ENCODE measurements at regions of chr5 and their contacts with region 1.

Region 1: DNA sequence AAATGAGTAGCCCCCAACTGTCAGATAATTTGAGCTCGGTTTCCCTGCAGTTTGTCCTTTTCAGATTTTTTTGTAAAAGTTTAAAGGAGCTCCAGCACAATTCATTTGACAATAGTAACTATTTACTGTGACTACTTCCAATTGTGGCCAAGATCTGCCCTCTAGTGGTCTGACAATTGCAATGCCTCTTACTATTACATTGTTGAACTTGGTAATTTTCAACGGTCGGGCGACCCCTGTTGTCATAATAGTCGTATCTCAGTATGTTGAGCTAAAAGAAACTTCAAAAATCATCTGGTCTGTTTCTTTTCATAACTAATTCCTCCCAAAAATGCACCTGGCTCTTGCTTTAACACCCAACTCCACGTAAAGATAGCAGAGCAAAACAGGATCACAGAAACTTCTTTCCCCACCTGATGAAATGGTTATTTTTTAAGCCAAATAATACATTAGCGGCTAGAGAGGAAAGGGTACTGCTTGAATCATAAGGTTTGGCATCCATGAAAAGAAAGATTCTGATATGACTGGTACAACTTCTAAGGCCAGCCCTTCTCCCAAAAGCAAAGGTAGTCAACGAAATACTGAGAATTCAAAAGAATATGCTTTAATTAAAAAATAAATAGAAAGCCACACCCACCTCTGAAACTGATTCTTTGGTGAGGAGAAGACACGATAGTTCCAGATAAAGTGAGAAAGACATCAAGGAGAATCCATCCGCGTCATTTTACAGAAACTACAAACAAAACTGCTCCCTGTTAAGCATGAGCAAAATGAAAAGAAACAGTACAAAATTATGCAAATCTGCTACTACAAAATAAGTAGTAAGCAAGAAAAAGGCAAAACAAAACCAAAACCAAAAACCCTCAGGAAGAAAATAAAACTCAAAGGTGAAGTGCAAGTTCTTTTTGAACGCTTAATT is 76.9 kb upstream of the HTR4 start:
- DNase-seq: peak; percentile 56 to 75 (median 70)
- H3K4me3 ChIP-seq: no peak overlapping the region
- H3K4me3 Mint-ChIP-seq: no peak overlapping the region
- H3K27ac ChIP-seq: no peak overlapping the region
- H3K27ac Mint-ChIP-seq: no peak overlapping the region
- H3K4me1 ChIP-seq: peaks cover 7 to 10% of the 10 kb centered on the region in 2 donors
- H3K4me1 Mint-ChIP-seq: peaks cover 19% of the 10 kb centered on the region
- H3K27me3 ChIP-seq: no peaks in the 10 kb centered on the region
- H3K27me3 Mint-ChIP-seq: peaks cover 1 to 2% (median 1%) of the 10 kb centered on the region in 3 donors
- CTCF ChIP-seq: peak; percentile 93

Region 2: DNA sequence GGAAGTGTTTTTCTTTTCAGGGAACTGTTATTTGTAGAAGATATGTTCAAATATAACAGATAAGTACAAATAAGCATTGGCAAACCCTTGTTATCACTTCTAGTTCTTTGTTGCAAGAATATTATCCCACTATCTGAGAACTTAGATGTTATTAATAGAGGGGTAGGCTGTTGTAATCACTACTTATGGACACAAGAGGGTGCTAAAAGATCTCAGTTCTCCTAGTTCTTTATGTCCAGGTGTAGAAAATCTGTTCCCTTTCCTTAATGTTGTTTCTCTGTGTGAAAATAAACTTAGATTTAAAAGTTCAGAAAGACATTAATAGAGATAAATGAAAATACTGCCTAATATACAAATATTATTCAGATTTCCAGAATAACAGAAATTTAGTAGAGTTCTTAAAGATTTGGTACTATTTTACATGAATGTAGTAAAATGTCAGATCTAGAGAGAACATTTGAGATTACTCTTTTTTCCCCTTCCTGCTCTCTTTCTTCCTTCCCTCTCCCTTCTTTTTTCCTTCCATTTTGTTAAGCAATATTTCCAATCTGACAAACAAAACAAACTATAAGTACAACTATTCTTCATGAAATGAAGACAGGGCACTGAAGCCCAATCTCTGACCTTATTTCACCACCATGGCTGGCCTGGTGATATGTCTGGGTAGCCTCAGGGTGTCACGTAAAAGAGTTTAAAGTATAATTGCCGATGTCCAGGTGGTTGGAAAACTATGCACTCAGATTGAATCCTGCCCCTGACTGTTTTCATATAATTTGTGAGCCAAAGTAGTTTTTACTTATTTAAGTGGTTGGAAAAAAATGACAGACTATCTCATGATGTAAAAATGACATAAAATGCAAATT is 781.3 kb before region 1 on chr5:
- intact Hi-C with region 1: loop called in 1 of 2 experiments (anchors 5 kb)
- DNase-seq: peak in 2 of 3 donors; percentile 8 to 32
- H3K4me3 ChIP-seq: no peak overlapping the region
- H3K4me3 Mint-ChIP-seq: no peak overlapping the region
- H3K27ac ChIP-seq: no peak overlapping the region
- H3K27ac Mint-ChIP-seq: no peak overlapping the region
- H3K4me1 ChIP-seq: no peaks in the 10 kb centered on the region
- H3K4me1 Mint-ChIP-seq: no peaks in the 10 kb centered on the region
- H3K27me3 ChIP-seq: no peaks in the 10 kb centered on the region
- H3K27me3 Mint-ChIP-seq: peaks cover 0 to 1% (median 0%) of the 10 kb centered on the region in 3 donors
- CTCF ChIP-seq: peak; percentile 81

Region 3: GRCh38 chr5:148179234-148179824 is 551.9 kb before region 1 on chr5:
- intact Hi-C with region 1: loop called in 1 of 2 experiments (anchors 5 kb)
- DNase-seq: peak; percentile 62 to 81 (median 77)
- H3K4me3 ChIP-seq: no peak overlapping the region
- H3K4me3 Mint-ChIP-seq: no peak overlapping the region
- H3K27ac ChIP-seq: no peak overlapping the region
- H3K27ac Mint-ChIP-seq: no peak overlapping the region
- H3K4me1 ChIP-seq: no peaks in the 10 kb centered on the region
- H3K4me1 Mint-ChIP-seq: peaks cover 2% of the 10 kb centered on the region
- H3K27me3 ChIP-seq: no peaks in the 10 kb centered on the region
- H3K27me3 Mint-ChIP-seq: peaks cover 1 to 5% (median 2%) of the 10 kb centered on the region in 3 donors
- CTCF ChIP-seq: peak; percentile 83

Region 4: DNA sequence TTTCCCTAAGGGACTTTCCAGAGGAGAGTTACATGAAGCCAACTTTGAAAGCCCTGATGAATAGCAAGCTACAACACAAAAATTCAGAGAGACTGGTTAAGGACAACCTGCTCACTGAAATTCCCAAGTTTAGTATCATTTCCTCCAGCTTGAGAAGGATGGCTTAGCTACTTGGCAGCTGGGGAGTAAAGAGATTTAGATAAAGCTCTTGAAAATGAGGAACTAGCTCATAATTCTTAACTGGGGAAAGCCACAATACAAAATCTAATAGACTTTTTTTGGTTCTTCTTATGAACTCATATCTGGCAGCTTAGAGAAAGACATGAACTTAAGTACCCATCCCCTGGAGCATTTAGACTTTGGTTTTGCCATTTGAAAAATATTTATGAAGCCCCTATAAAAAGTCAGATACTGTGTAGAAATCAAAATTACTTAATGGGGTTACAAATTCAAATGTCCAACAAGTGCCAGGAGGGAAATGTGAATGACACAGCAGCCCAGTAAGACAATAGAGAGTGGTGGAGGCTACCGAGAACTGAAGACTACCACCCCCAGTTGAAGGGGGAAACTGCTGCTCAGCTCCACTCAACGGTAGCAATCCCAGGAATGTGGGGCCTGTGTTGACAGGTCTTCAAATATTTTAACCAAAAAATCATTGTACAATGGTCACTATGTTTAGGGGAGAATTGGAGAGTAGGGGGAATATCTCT is 15.8 kb after region 1 on chr5:
- intact Hi-C with region 1: no loop called
- DNase-seq: peak in 2 of 3 donors; percentile 55 to 68
- H3K4me3 ChIP-seq: peak overlapping the region in 1 of 3 experiments; percentile 16
- H3K4me3 Mint-ChIP-seq: peak overlapping the region in 1 of 2 donors; percentile 76
- H3K27ac ChIP-seq: peak overlapping the region; percentile 40 to 82
- H3K27ac Mint-ChIP-seq: peak overlapping the region; percentile 78 to 93 (median 91)
- H3K4me1 ChIP-seq: peaks cover 48 to 57% of the 10 kb centered on the region in 2 donors
- H3K4me1 Mint-ChIP-seq: peaks cover 56% of the 10 kb centered on the region
- H3K27me3 ChIP-seq: no peaks in the 10 kb centered on the region
- H3K27me3 Mint-ChIP-seq: peaks cover 0 to 4% (median 2%) of the 10 kb centered on the region in 3 donors
- CTCF ChIP-seq: no peak

Region 5: DNA sequence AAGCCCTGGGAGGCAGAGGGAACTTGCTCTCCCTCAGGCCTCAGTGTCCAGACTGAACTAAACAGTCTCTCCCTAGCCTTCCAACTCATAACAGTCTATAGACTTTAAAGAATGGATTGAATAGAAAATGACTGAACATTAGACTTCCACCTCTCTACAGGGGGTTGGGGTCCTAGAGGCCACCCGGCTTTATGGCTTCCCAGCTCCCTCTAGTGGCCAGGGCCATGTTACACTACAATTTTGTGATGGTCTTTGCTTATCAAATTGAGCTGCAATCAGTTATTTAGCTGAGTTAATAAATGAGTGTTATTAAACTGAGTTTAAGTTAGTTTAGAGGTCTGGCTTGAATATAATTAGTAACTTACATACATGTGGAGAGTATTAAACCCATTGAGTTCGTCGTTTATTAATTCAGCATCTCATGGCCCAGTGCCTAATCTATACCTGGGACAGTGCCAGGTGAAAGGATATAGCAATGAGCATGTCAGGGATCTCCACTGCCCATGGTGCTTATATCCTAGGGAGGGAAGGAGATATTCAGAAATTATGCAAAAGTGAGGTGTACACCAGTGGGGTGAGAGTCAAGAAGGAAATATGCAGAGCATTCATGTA is 226.5 kb after region 1 on chr5:
- intact Hi-C with region 1: loop called in 1 of 2 experiments (anchors 10 kb)
- DNase-seq: peak; percentile 5 to 44 (median 37)
- H3K4me3 ChIP-seq: no peak overlapping the region
- H3K4me3 Mint-ChIP-seq: no peak overlapping the region
- H3K27ac ChIP-seq: no peak overlapping the region
- H3K27ac Mint-ChIP-seq: no peak overlapping the region
- H3K4me1 ChIP-seq: peaks cover under 1% of the 10 kb centered on the region in 2 donors
- H3K4me1 Mint-ChIP-seq: peaks cover 7% of the 10 kb centered on the region
- H3K27me3 ChIP-seq: no peaks in the 10 kb centered on the region
- H3K27me3 Mint-ChIP-seq: no peaks in the 10 kb centered on the region
- CTCF ChIP-seq: peak; percentile 97

Region 6: GRCh38 chr5:148998174-148998797 is 267.1 kb after region 1 on chr5:
- intact Hi-C with region 1: loop called (anchors 1 to 5 kb)
- DNase-seq: peak; percentile 37 to 67 (median 55)
- H3K4me3 ChIP-seq: no peak overlapping the region
- H3K4me3 Mint-ChIP-seq: no peak overlapping the region
- H3K27ac ChIP-seq: no peak overlapping the region
- H3K27ac Mint-ChIP-seq: peak overlapping the region in 1 of 7 donors; percentile 4
- H3K4me1 ChIP-seq: no peaks in the 10 kb centered on the region
- H3K4me1 Mint-ChIP-seq: peaks cover 2% of the 10 kb centered on the region
- H3K27me3 ChIP-seq: no peaks in the 10 kb centered on the region
- H3K27me3 Mint-ChIP-seq: peaks cover 0 to 2% (median 0%) of the 10 kb centered on the region in 3 donors
- CTCF ChIP-seq: peak; percentile 80

Region 7: GRCh38 chr5:149035372-149035790 is 304.2 kb after region 1 on chr5:
- intact Hi-C with region 1: loop called (anchors 10 kb)
- DNase-seq: peak; percentile 53 to 70 (median 64)
- H3K4me3 ChIP-seq: no peak overlapping the region
- H3K4me3 Mint-ChIP-seq: peak overlapping the region in 1 of 2 donors; percentile 61
- H3K27ac ChIP-seq: no peak overlapping the region
- H3K27ac Mint-ChIP-seq: peak overlapping the region in 3 of 7 donors; percentile 5 to 52 (median 31)
- H3K4me1 ChIP-seq: peaks cover 46 to 52% of the 10 kb centered on the region in 2 donors
- H3K4me1 Mint-ChIP-seq: peaks cover 53% of the 10 kb centered on the region
- H3K27me3 ChIP-seq: no peaks in the 10 kb centered on the region
- H3K27me3 Mint-ChIP-seq: peaks cover 0 to 2% (median 2%) of the 10 kb centered on the region in 3 donors
- CTCF ChIP-seq: peak; percentile 86